HEK293 (cell line): ENCODE measurements at regions of chr6 and their contacts with region 1.

Region 1: GRCh38 chr6:30212865-30213666 is at the start of gene TRIM26:
- H3K4me3 ChIP-seq: peak within 1 kb of the TSS; percentile 93
- H3K27ac ChIP-seq: peak within 1 kb of the TSS; percentile 88
- H3K4me1 ChIP-seq: peaks cover 31% of the 10 kb centered on the region
- CTCF ChIP-seq: no peak

Region 2: GRCh38 chr6:30194797-30195690 is 18.0 kb before region 1 on chr6:
- CTCF ChIA-PET with region 1: interaction called, 3 read pairs
- POLR2A ChIA-PET with region 1: interaction called, 10 read pairs
- H3K4me3 ChIP-seq: no peak overlapping the region
- H3K27ac ChIP-seq: no peak overlapping the region
- H3K4me1 ChIP-seq: 0 out of 2 replicates have a peak, but pooled peaks cover 3% of the 10 kb centered on the region
- CTCF ChIP-seq: no peak

Region 3: GRCh38 chr6:30326526-30327260 is 113.6 kb after region 1 on chr6 and contains the start of gene TRIM39:
- CTCF ChIA-PET with region 1: interaction called, 7 read pairs
- POLR2A ChIA-PET with region 1: interaction called, 24 read pairs
- H3K4me3 ChIP-seq: peak within 1 kb of the TSS; percentile 91
- H3K27ac ChIP-seq: peak within 1 kb of the TSS; percentile 81
- H3K4me1 ChIP-seq: peaks cover 7% of the 10 kb centered on the region; the same call in 1 of the 2 replicates
- CTCF ChIP-seq: peak; percentile 27; the same call in 1 of the 2 replicates